MCF 10A (cell line): ENCODE measurements at regions of chr2 and their contacts with region 1.

Region 1: GRCh38 chr2:84865181-84865783 is 15.6 kb downstream of the TRABD2A start:
- DNase-seq: peak; percentile 47
- H3K4me3 Mint-ChIP-seq: no peak overlapping the region
- H3K27ac Mint-ChIP-seq: no peak overlapping the region
- H3K4me1 Mint-ChIP-seq: peaks cover 5% of the 10 kb centered on the region
- H3K27me3 Mint-ChIP-seq: no peaks in the 10 kb centered on the region
- CTCF ChIP-seq: peak; percentile 49

Region 2: GRCh38 chr2:84495539-84496146 is 369.6 kb before region 1 on chr2:
- CTCF ChIA-PET with region 1: interaction called, 8 read pairs
- POLR2A ChIA-PET with region 1: no interaction called
- intact Hi-C with region 1: loop called (anchors 1 kb)
- DNase-seq: peak; percentile 72
- H3K4me3 Mint-ChIP-seq: no peak overlapping the region
- H3K27ac Mint-ChIP-seq: peak overlapping the region; percentile 35
- H3K4me1 Mint-ChIP-seq: peaks cover 21% of the 10 kb centered on the region
- H3K27me3 Mint-ChIP-seq: no peaks in the 10 kb centered on the region
- CTCF ChIP-seq: peak; percentile 53

Region 3: DNA sequence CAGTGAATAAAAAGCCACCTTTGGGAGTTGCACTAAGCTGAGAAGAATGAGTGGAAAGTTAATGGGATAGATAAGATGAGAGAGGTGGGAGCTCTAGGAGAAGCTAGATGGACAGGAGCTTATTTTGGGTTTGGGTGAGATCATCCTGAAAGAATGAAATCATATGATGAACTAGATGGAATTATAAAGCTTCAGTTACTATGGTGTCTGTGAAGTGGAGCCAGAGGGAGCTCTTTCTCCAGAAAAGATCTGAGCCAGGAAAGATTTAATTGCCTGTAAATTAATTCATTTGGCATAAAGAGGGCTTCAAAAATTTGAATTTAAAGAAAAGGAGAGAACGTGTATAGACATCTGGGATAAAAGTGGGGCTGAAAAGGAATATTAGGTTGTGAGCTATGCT is 338.7 kb before region 1 on chr2:
- CTCF ChIA-PET with region 1: interaction called, 12 read pairs
- POLR2A ChIA-PET with region 1: interaction called, 5 read pairs
- intact Hi-C with region 1: loop called (anchors 1 kb)
- DNase-seq: no peak
- H3K4me3 Mint-ChIP-seq: no peak overlapping the region
- H3K27ac Mint-ChIP-seq: no peak overlapping the region
- H3K4me1 Mint-ChIP-seq: no peaks in the 10 kb centered on the region
- H3K27me3 Mint-ChIP-seq: no peaks in the 10 kb centered on the region
- CTCF ChIP-seq: peak; percentile 25